ENCODE measurements at regions of chr5 and their contacts with region 1.

Region 1: DNA sequence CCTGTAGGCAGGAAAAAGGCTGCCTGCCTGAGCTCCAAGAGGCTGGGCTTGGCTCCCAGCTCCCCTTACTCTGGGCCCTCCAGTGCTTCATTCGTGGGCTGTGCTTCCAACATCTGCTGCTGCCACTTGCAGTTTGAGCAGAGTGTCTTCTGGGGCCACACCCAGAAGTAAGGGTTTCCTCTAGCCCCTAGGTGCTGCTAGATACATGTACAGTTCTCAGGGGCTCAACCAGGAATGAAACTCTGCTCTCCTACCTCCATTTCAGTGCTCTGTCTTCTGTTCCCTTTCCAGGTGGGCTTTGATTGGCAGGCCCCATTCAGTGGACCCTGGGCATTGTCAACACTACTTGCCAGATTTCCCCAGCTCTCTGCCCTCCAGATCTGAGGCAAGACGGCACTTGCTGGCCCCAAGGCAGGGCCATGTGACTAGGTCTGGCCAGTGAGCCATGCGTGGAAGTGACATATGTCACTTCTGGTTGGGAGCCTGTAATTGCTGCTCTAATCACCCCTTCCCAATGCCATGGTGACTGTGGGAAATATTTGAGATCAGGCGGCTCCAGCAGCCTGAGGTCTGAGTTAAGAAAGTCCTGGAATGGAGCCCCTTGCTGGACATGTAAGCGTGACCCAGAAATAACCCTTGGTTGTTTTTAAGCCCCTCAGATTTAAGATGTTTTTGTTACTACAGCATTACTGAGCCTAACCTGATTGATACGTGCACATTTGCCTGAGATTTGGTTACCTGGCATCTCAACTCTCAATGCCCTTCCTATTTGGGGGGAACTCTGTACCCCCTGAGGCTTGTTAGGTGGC is 9.4 kb upstream of the BOD1 start:
- DNase-seq: no peak
- H3K4me3 ChIP-seq: no peak overlapping the region
- H3K27ac ChIP-seq: no peak overlapping the region
- H3K4me1 ChIP-seq: peaks cover 17 to 23% of the 10 kb centered on the region in 2 donors
- H3K27me3 ChIP-seq: no peaks in the 10 kb centered on the region
- CTCF ChIP-seq: peak in 1 of 6 experiments; percentile 11
- POLR2A ChIP-seq: no peak

Region 2: DNA sequence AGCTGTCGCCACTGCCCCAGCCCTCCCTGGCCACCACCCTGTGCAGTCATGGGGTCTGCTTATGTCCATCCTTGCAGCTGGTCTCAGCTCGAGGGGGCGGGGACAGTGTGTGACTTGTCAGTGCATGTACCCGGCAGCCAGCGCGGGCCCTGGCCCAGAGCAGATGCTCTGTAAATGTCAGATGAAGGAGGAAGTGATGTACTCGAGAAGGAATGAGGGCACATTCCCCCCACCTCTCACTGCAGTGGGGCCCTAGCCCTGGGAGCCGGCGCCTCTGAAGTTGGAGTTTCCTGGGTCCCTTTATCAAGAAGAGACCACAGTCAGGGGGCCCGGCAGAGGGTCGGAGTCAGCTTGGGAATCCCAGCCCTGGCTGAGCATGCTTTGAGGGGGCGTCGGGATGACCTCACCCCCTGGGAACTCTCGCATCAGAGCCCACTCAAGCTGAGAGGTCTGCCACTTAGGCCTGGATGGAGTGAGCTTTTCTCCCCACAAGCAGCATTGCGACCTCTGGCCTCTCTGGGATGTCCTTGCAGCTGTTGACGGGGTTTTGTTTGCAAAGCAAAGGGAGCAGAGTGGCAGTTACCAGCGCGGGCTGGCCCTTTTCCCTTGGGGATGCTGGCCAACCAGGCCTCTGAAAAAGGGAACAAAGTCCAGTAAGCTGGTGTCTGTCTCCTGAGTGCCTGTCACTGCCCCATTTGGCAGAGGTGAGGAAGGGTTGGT is 965.8 kb before region 1 on chr5:
- intact Hi-C with region 1: no loop called
- DNase-seq: peak; percentile 25 to 40
- H3K4me3 ChIP-seq: no peak overlapping the region
- H3K27ac ChIP-seq: peak overlapping the region in 2 of 3 donors; percentile 28 to 62
- H3K4me1 ChIP-seq: peaks cover 0 to 27% of the 10 kb centered on the region in 2 donors
- H3K27me3 ChIP-seq: no peaks in the 10 kb centered on the region
- CTCF ChIP-seq: no peak
- POLR2A ChIP-seq: no peak

Region 3: DNA sequence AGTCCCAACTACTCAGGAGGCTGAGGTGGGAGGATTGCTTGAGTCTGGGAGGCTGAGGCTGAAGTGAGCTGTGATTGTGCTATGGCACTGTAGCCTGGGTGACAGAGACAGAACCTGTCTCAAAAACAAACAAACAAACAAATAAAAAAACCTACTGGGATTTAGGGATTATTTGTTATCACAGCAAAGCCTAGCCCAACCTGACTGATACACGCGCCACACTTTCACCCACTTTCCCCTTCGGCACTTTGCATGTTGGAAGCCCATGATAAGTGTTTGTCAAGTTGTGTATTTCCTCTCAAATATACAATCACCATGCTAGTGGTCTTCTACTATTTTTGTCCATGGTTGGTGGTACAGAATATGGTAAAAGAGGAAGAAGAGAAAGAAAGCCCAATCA is 247.2 kb before region 1 on chr5:
- intact Hi-C with region 1: no loop called
- DNase-seq: no peak
- H3K4me3 ChIP-seq: no peak overlapping the region
- H3K27ac ChIP-seq: no peak overlapping the region
- H3K4me1 ChIP-seq: no peaks in the 10 kb centered on the region
- H3K27me3 ChIP-seq: no peaks in the 10 kb centered on the region
- CTCF ChIP-seq: no peak
- POLR2A ChIP-seq: no peak

Region 4: GRCh38 chr5:173878224-173878967 is 252.5 kb after region 1 on chr5:
- intact Hi-C with region 1: loop called (anchors 10 kb)
- DNase-seq: peak; percentile 83 to 86
- H3K4me3 ChIP-seq: no peak overlapping the region
- H3K27ac ChIP-seq: peak overlapping the region; percentile 30 to 42 (median 34)
- H3K4me1 ChIP-seq: peaks cover 21 to 30% of the 10 kb centered on the region in 2 donors
- H3K27me3 ChIP-seq: no peaks in the 10 kb centered on the region
- CTCF ChIP-seq: no peak
- POLR2A ChIP-seq: no peak